H1 (cell line): ENCODE measurements at regions of chr14 and their contacts with region 1.

Region 1: GRCh38 chr14:77000340-77001270 is 27.9 kb downstream of the IRF2BPL start:
- DNase-seq: no peak
- H3K4me3 ChIP-seq: no peak overlapping the region
- H3K27ac ChIP-seq: no peak overlapping the region
- H3K4me1 ChIP-seq: peaks cover 11 to 28% (median 18%) of the 10 kb centered on the region in 4 experiments
- H3K27me3 ChIP-seq: peaks cover 0 to 1% (median 0%) of the 10 kb centered on the region in 4 experiments; a peak in 1 of 7 replicates
- CTCF ChIP-seq: no peak
- EP300 ChIP-seq: no peak
- POLR2A ChIP-seq: no peak
- RAD21 ChIP-seq: no peak

Region 2: DNA sequence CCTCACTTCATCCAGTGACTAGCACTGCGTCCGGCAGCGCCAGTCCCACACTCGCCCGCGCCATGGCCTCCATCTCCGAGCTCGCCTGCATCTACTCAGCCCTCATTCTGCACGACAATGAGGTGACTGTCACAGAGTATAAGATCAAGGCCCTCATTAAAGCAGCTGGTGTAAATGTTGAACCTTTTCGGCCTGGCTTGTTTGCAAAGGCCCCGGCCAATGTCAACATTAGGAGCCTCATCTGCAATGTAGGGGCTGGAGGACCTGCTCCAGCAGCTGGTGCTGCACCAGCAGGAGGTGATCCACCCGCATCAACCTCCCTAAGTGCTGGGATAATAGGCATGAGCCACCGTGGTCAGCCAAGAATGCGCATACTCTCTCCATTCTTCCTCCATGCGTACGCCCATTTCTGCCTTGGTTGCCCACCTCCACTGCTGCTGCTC is 32.0 kb before region 1 on chr14:
- CTCF ChIA-PET with region 1: interaction called, 11 read pairs
- POLR2A ChIA-PET with region 1: interaction called, 4 read pairs
- DNase-seq: no peak
- H3K4me3 ChIP-seq: no peak overlapping the region
- H3K27ac ChIP-seq: peak overlapping the region; percentile 56; the same call in 1 of the 2 replicates
- H3K4me1 ChIP-seq: peaks cover 0 to 33% (median 17%) of the 10 kb centered on the region in 4 experiments; a peak in 6 of 7 replicates
- H3K27me3 ChIP-seq: no peaks in the 10 kb centered on the region
- CTCF ChIP-seq: peak in 2 of 3 experiments; percentile 23 to 25; a peak in 2 of 4 replicates
- EP300 ChIP-seq: no peak
- POLR2A ChIP-seq: no peak
- RAD21 ChIP-seq: peak; percentile 26 to 41; a peak in 3 of 4 replicates

Region 3: DNA sequence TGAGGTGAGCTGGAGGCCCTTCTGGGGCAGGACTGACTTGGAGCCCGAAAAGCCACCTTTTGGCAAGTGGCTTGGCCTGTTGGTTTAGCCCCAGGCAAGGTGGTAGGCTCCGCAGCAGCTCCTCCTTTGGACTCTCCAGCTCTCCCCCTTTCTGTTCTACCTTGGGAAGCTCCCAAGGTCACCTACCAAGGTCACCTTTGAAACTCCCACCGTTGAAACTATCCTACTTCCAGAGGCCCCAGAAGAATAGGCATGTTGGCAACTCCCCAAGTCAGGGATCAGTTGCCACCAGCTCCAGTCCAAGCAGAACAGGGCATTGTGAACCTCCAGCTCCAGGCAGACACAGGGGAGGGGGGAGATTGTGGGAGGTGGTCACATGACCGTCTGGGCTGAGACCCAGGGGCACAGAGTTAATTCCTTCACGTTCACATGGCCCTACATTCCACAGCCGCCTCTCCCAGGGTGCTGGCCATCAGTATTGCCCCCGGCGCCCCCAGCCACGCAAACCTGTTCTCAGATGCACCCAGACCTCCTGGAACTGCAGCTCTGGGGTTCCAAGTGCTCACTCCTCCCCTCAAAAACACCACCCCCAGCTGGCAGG is 13.5 kb after region 1 on chr14:
- CTCF ChIA-PET with region 1: interaction called, 18 read pairs
- POLR2A ChIA-PET with region 1: interaction called, 5 read pairs
- DNase-seq: no peak
- H3K4me3 ChIP-seq: no peak overlapping the region
- H3K27ac ChIP-seq: no peak overlapping the region
- H3K4me1 ChIP-seq: peaks cover 0 to 12% (median 2%) of the 10 kb centered on the region in 4 experiments; a peak in 3 of 7 replicates
- H3K27me3 ChIP-seq: no peaks in the 10 kb centered on the region; a peak in 1 of 7 replicates
- CTCF ChIP-seq: no peak
- EP300 ChIP-seq: no peak
- POLR2A ChIP-seq: no peak
- RAD21 ChIP-seq: no peak

Region 4: DNA sequence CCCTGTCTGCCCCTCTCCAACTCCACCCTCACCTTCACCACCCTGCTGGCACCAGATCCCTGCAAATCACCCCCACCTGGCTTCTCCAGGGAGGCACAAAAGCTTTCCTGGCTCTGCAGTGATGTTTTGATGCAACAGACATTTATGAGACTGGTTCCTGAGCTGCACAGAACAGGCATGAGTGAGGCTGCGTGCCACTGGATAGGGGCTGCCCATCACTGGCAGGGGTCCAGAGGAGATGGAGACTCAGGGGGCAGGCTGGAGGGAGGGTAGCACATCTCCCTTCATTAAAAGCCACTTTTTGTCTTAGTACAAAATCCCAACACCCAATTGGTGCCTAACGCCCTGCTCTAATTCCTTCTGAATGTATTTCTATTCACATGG is 158.3 kb after region 1 on chr14:
- CTCF ChIA-PET with region 1: no interaction called
- POLR2A ChIA-PET with region 1: no interaction called
- DNase-seq: no peak
- H3K4me3 ChIP-seq: peak overlapping the region in 1 of 4 experiments; percentile 29; a peak in 1 of 8 replicates
- H3K27ac ChIP-seq: no peak overlapping the region
- H3K4me1 ChIP-seq: peaks cover 3 to 21% (median 14%) of the 10 kb centered on the region in 4 experiments
- H3K27me3 ChIP-seq: no peaks in the 10 kb centered on the region; a peak in 1 of 7 replicates
- CTCF ChIP-seq: no peak
- EP300 ChIP-seq: no peak
- POLR2A ChIP-seq: no peak
- RAD21 ChIP-seq: no peak